Ovary (tissue), 10 donors: ENCODE measurements at regions of chr6 and their contacts with region 1.

Region 1: GRCh38 chr6:138278326-138278725 is 60.0 kb upstream of the PBOV1 start:
- DNase-seq: peak in 1 of 5 donors; percentile 21
- H3K4me3 ChIP-seq: no peak overlapping the region
- H3K27ac ChIP-seq: no peak overlapping the region
- H3K4me1 ChIP-seq: no peaks in the 10 kb centered on the region
- H3K27me3 ChIP-seq: no peaks in the 10 kb centered on the region
- CTCF ChIP-seq: no peak
- EP300 ChIP-seq: no peak
- POLR2A ChIP-seq: no peak

Region 2: DNA sequence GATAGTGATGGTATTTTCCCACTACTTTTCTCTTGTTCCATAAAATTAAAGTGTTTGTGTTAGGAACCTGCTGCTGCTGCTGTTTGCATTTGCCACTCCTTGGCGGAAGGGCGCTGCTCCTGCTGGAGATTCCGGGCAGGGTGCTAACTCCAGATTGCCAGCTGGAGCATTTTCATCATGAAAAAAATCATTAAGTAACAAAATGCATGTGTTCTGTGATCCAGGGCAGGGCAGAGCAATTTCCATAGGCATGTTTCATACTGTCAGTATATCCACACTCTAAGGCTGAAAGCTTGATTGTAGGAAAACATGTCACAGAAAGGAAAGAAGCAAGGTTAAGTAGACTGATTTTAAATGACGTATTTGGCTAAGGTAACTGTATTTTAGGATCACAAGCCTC is 84.0 kb before region 1 on chr6:
- intact Hi-C with region 1: loop called in 1 of 4 experiments (anchors 5 kb)
- DNase-seq: no peak
- H3K4me3 ChIP-seq: no peak overlapping the region
- H3K27ac ChIP-seq: no peak overlapping the region
- H3K4me1 ChIP-seq: no peaks in the 10 kb centered on the region
- H3K27me3 ChIP-seq: no peaks in the 10 kb centered on the region
- CTCF ChIP-seq: no peak
- EP300 ChIP-seq: no peak
- POLR2A ChIP-seq: no peak

Region 3: GRCh38 chr6:139080255-139080920 is 802.1 kb after region 1 on chr6:
- intact Hi-C with region 1: no loop called
- DNase-seq: no peak
- H3K4me3 ChIP-seq: no peak overlapping the region
- H3K27ac ChIP-seq: no peak overlapping the region
- H3K4me1 ChIP-seq: no peaks in the 10 kb centered on the region
- H3K27me3 ChIP-seq: no peaks in the 10 kb centered on the region
- CTCF ChIP-seq: no peak
- EP300 ChIP-seq: no peak
- POLR2A ChIP-seq: no peak